Naive thymus-derived CD4-positive, alpha-beta T cell (primary cell): ENCODE measurements at regions of chr3 and their contacts with region 1.

Region 1: DNA sequence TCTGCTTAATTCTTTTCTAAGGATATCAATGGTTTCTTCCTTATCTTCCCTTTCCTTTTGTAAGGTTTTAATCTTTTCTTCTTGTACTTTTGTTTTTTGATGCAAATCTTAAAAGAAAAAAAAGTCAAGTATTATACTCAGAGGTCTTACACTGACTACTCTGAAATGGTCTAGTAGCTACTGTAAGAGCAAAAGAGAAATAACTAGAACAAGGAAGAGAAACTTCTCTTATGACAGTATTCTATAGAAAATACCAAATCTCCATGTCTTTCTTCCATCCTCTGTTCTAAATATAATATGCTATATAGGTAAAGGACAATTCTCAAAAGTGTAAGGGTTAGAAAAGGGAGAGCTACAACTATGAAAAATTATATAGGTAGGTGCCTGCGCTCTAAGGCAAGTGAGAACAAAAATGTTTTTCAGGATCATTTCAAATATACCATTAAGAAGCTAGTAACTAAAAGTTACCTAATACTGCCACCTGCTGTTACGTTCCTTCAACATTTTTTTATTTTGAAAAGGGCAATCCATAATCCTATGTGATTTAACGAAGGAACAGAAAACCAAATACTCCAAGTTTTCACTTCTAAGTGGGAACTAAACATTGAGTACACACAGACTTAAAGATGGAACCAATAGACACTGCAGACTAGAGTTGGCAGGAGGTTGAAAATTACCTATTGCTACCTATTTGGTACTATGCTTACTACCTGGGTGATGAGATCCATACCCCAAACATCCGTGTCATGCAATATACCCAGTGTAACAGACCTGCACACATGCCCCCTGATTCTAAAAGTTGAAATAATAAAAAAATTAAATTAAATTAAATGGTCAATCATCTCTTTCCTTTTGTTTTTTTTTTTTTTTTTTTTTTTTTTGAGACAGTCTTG is 36.7 kb downstream of the CIP2A start:
- DNase-seq: peak in 7 of 9 donors; percentile 4 to 40 (median 28)
- ATAC-seq: peak; percentile 66
- H3K4me3 ChIP-seq: no peak overlapping the region
- H3K4me3 Mint-ChIP-seq: no peak overlapping the region
- H3K27ac ChIP-seq: no peak overlapping the region
- H3K27ac Mint-ChIP-seq: no peak overlapping the region
- H3K4me1 ChIP-seq: no peaks in the 10 kb centered on the region
- H3K4me1 Mint-ChIP-seq: peaks cover 0 to 12% (median 0%) of the 10 kb centered on the region in 7 donors
- H3K27me3 ChIP-seq: no peaks in the 10 kb centered on the region
- H3K27me3 Mint-ChIP-seq: no peaks in the 10 kb centered on the region

Region 2: GRCh38 chr3:107429320-107430181 is 1123.0 kb before region 1 on chr3:
- CTCF ChIA-PET with region 1: no interaction called
- POLR2A ChIA-PET with region 1: no interaction called
- intact Hi-C with region 1: loop called in 1 of 2 experiments (anchors 5 kb)
- DNase-seq: peak; percentile 33 to 72 (median 61)
- ATAC-seq: peak; percentile 77
- H3K4me3 ChIP-seq: peak overlapping the region; percentile 76
- H3K4me3 Mint-ChIP-seq: peak overlapping the region; percentile 81 to 95 (median 90)
- H3K27ac ChIP-seq: no peak overlapping the region
- H3K27ac Mint-ChIP-seq: peak overlapping the region in 3 of 9 donors; percentile 25 to 80 (median 38)
- H3K4me1 ChIP-seq: peaks cover 11 to 12% of the 10 kb centered on the region in 2 donors
- H3K4me1 Mint-ChIP-seq: peaks cover 0 to 27% (median 13%) of the 10 kb centered on the region in 7 donors
- H3K27me3 ChIP-seq: no peaks in the 10 kb centered on the region
- H3K27me3 Mint-ChIP-seq: peaks cover 0 to 61% (median 0%) of the 10 kb centered on the region in 5 donors

Region 3: GRCh38 chr3:107927361-107928083 is 625.0 kb before region 1 on chr3:
- CTCF ChIA-PET with region 1: no interaction called
- POLR2A ChIA-PET with region 1: no interaction called
- intact Hi-C with region 1: loop called in 1 of 2 experiments (anchors 5 kb)
- DNase-seq: peak; percentile 39 to 71 (median 57)
- ATAC-seq: peak; percentile 92
- H3K4me3 ChIP-seq: peak overlapping the region; percentile 60
- H3K4me3 Mint-ChIP-seq: peak overlapping the region; percentile 86 to 93 (median 89)
- H3K27ac ChIP-seq: no peak overlapping the region
- H3K27ac Mint-ChIP-seq: peak overlapping the region in 5 of 9 donors; percentile 26 to 88 (median 64)
- H3K4me1 ChIP-seq: peaks cover 5 to 6% of the 10 kb centered on the region in 2 donors
- H3K4me1 Mint-ChIP-seq: peaks cover 9 to 15% (median 13%) of the 10 kb centered on the region in 7 donors
- H3K27me3 ChIP-seq: peaks cover 0 to under 1% of the 10 kb centered on the region in 2 donors
- H3K27me3 Mint-ChIP-seq: peaks cover 0 to 17% (median 4%) of the 10 kb centered on the region in 5 donors

Region 4: GRCh38 chr3:108153451-108153981 is 399.0 kb before region 1 on chr3:
- CTCF ChIA-PET with region 1: no interaction called
- POLR2A ChIA-PET with region 1: no interaction called
- intact Hi-C with region 1: loop called in 1 of 2 experiments (anchors 5 kb)
- DNase-seq: peak in 8 of 9 donors; percentile 36 to 64 (median 45)
- ATAC-seq: peak; percentile 73
- H3K4me3 ChIP-seq: no peak overlapping the region
- H3K4me3 Mint-ChIP-seq: no peak overlapping the region
- H3K27ac ChIP-seq: no peak overlapping the region
- H3K27ac Mint-ChIP-seq: peak overlapping the region in 1 of 9 donors; percentile 25
- H3K4me1 ChIP-seq: peaks cover 0 to 4% of the 10 kb centered on the region in 2 donors
- H3K4me1 Mint-ChIP-seq: peaks cover 0 to 21% (median 13%) of the 10 kb centered on the region in 7 donors
- H3K27me3 ChIP-seq: no peaks in the 10 kb centered on the region
- H3K27me3 Mint-ChIP-seq: no peaks in the 10 kb centered on the region

Region 5: DNA sequence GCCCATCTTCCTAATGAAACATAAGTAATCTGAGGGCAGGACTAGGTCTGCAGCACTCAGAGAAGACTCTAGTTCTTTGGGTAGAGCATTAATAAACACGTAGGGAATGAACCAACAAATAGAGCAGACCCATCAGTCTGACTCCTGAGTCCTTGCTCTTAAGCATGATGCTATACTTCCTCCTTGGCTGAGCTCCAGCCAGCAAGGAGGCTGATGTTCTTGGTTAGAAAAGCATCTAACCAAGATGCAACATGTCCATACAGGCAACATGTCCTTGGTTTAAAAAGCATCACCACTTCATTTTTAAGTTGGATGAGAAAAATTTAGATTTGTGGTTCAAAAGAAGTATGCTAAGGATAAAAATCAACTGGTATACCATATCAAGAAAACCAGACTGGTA is 33.6 kb before region 1 on chr3:
- CTCF ChIA-PET with region 1: no interaction called
- POLR2A ChIA-PET with region 1: no interaction called
- intact Hi-C with region 1: no loop called
- DNase-seq: no peak
- ATAC-seq: no peak
- H3K4me3 ChIP-seq: no peak overlapping the region
- H3K4me3 Mint-ChIP-seq: no peak overlapping the region
- H3K27ac ChIP-seq: no peak overlapping the region
- H3K27ac Mint-ChIP-seq: no peak overlapping the region
- H3K4me1 ChIP-seq: no peaks in the 10 kb centered on the region
- H3K4me1 Mint-ChIP-seq: no peaks in the 10 kb centered on the region
- H3K27me3 ChIP-seq: no peaks in the 10 kb centered on the region
- H3K27me3 Mint-ChIP-seq: peaks cover 0 to 17% (median 5%) of the 10 kb centered on the region in 5 donors

Region 6: DNA sequence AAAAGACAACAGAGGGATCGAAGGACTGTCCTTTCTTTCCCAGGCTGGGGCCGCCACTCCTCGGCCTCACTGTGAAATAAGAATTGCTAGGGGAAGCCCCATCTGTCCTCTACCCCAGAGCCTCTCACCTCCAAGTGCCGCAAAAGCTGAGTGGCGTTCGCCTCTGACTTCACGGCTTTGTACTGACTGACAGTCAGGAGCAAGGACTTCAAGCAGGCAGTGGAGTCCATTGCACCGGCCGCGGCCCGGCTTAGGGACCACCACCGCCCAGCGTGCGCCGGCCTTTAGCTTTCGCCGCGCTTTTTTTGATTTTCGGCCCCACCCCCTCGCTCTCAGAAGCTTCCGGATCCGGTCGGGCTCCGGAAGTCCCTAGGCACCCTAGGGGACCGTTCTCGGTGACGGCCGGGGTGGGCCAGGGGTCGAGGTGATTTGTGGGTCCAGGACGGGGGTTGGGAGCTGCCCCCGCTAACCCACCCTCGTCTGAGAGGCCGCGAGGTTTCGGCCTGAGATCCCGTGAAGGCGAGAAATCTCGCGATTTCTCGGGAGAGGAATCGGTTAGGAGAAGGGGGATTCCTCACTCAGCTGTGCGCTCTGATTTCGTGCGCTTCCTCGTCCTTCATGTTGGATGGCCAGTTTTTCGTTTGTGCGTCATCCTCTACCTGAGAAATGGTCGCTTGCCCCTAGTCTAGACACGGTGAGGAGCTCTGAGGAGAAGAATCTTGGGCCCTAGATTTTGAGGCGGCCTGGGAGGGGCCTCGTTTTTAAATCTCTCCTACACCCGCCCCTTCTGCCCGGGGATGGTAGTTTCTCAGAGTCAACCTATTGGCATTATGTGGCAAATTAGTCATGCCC is 36.9 kb after region 1 on chr3 and contains the starts of genes CIP2A and DZIP3:
- CTCF ChIA-PET with region 1: interaction called, 4 read pairs
- POLR2A ChIA-PET with region 1: interaction called, 3 read pairs
- intact Hi-C with region 1: loop called in 1 of 2 experiments (anchors 2 kb)
- DNase-seq: peak; percentile 74 to 88 (median 82)
- ATAC-seq: peak; percentile 83
- H3K4me3 ChIP-seq: peak within 1 kb of the TSS; percentile 87
- H3K4me3 Mint-ChIP-seq: peak within 1 kb of the TSS; percentile 94 to 99 (median 98)
- H3K27ac ChIP-seq: peak within 1 kb of the TSS; percentile 92
- H3K27ac Mint-ChIP-seq: peak within 1 kb of the TSS; percentile 95 to 100 (median 99)
- H3K4me1 ChIP-seq: peaks cover 11 to 15% of the 10 kb centered on the region in 2 donors
- H3K4me1 Mint-ChIP-seq: peaks cover 12 to 53% (median 39%) of the 10 kb centered on the region in 7 donors
- H3K27me3 ChIP-seq: no peaks in the 10 kb centered on the region
- H3K27me3 Mint-ChIP-seq: no peaks in the 10 kb centered on the region
- total RNA-seq, gene CIP2A: 3.4 to 44.2 (median 4.1) TPM
- total RNA-seq, gene DZIP3: 9.6 to 17.3 (median 14.6) TPM

Region 7: DNA sequence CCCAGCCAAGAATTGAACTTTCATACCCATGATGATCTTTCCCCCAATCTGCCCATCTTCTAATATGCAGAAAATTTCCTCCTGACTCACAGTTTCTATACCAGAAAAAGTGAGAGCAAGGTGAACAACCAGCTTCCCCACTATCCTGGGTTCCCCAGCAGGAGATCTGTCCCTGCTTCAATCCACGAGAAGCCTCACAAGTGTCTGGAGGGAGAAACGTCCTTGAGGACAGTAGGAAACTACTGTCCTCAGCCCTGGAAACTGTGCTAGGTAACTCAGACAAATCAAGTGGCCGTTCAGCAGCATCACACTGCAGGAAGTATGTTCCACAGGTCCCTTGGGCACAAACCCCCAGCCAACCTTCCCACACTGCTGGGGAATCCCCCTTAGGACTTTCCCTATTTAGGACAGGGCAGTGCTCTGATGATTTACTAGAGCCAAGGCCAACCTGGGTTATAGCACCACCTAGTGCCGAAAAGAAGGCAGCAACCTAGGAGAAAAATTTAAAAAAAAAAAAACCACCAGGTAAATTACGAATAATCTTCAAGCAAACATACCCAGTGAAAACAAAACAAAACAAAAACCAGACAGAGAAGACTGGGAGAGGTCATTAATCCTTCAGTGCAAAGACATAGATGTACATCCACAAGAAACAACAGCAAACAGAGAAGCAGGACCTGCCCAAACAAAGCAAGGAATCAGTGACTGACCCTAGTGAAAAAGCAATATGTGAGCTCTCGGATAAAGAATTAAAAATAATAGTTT is 529.4 kb after region 1 on chr3:
- CTCF ChIA-PET with region 1: no interaction called
- POLR2A ChIA-PET with region 1: no interaction called
- intact Hi-C with region 1: loop called in 1 of 2 experiments (anchors 2 kb)
- DNase-seq: peak in 2 of 9 donors; percentile 14 to 30
- ATAC-seq: peak; percentile 84
- H3K4me3 ChIP-seq: no peak overlapping the region
- H3K4me3 Mint-ChIP-seq: no peak overlapping the region
- H3K27ac ChIP-seq: no peak overlapping the region
- H3K27ac Mint-ChIP-seq: peak overlapping the region in 1 of 9 donors; percentile 48
- H3K4me1 ChIP-seq: no peaks in the 10 kb centered on the region
- H3K4me1 Mint-ChIP-seq: peaks cover 0 to 3% (median 0%) of the 10 kb centered on the region in 7 donors
- H3K27me3 ChIP-seq: no peaks in the 10 kb centered on the region
- H3K27me3 Mint-ChIP-seq: peaks cover 25 to 54% (median 33%) of the 10 kb centered on the region in 5 donors